Esophagus muscularis mucosa (tissue), 4 donors: ENCODE measurements at regions of chr6 and their contacts with region 1.

Region 1: DNA sequence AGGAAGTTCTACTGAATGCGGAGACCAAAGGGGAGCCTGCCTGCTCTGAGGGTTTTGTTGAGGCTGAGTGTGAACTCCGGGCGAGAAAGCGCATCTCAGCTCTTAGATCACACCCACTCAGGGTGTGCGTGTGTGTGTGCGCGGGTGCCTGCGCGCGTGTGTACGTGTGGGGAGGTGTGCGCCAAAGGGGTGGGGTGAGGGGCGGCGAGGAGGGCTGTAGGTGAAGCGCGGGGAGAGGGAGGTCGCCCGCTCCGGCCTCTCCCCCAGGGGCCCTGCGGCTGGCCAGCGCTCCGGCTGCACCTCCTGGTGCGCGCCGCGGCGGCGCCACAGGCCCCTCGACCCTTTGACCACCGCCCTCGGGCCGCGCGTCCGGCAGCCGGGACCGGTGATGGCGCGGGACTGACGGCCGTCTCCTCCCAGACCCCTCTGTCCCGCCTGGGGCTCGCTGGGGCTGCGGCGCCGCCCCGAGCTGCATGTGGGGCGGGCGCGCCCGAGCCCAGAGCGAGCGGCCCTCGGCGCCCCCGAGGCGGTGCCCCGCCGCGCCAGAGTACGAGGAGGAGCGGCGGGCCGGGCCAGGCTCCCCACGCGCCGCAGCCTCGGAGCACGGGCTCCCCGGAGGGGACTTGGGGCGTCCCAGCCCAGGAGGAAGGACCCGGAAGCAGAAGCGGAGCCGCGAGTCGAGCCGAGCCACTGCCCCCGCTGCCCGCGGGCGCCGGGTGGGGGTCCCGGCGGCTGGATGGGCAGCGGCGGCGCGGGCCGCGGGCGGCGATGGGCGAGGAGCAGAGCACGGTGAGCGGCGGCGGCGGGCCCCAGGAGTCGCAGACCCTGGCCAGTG is at the start of gene RNF217:
- DNase-seq: no peak
- H3K4me3 ChIP-seq: peak within 1 kb of the TSS; percentile 79 to 91 (median 86)
- H3K27ac ChIP-seq: peak within 1 kb of the TSS; percentile 93 to 98 (median 96)
- H3K4me1 ChIP-seq: peaks cover 0 to 45% (median 39%) of the 10 kb centered on the region in 4 donors
- H3K27me3 ChIP-seq: no peaks in the 10 kb centered on the region
- CTCF ChIP-seq: peak in 1 of 3 experiments; percentile 26
- EP300 ChIP-seq: no peak
- POLR2A ChIP-seq: no peak
- total RNA-seq, gene RNF217: 20.0 to 34.9 (median 23.2) TPM

Region 2: DNA sequence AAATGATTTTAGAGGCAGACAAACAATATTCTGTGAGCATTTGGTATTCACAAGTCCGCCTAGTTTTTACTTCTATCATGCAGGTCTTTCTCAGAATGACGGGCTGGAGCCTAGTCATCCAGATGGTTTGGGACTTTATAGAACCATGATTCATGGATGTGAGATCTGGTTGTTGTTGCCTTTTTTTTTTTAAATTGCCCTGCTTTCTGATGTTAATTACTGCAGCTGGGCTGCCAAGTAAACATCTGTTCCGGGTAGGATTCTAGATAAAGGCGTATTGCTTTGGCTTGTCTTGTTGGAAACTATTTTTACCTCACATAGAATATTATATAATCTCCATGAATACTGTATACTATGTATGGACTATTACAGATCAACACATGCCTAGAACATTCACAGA is 58.4 kb after region 1 on chr6:
- intact Hi-C with region 1: no loop called
- DNase-seq: no peak
- H3K4me3 ChIP-seq: no peak overlapping the region
- H3K27ac ChIP-seq: no peak overlapping the region
- H3K4me1 ChIP-seq: peaks cover 10 to 19% (median 15%) of the 10 kb centered on the region in 4 donors
- H3K27me3 ChIP-seq: no peaks in the 10 kb centered on the region
- CTCF ChIP-seq: no peak
- EP300 ChIP-seq: no peak
- POLR2A ChIP-seq: no peak

Region 3: DNA sequence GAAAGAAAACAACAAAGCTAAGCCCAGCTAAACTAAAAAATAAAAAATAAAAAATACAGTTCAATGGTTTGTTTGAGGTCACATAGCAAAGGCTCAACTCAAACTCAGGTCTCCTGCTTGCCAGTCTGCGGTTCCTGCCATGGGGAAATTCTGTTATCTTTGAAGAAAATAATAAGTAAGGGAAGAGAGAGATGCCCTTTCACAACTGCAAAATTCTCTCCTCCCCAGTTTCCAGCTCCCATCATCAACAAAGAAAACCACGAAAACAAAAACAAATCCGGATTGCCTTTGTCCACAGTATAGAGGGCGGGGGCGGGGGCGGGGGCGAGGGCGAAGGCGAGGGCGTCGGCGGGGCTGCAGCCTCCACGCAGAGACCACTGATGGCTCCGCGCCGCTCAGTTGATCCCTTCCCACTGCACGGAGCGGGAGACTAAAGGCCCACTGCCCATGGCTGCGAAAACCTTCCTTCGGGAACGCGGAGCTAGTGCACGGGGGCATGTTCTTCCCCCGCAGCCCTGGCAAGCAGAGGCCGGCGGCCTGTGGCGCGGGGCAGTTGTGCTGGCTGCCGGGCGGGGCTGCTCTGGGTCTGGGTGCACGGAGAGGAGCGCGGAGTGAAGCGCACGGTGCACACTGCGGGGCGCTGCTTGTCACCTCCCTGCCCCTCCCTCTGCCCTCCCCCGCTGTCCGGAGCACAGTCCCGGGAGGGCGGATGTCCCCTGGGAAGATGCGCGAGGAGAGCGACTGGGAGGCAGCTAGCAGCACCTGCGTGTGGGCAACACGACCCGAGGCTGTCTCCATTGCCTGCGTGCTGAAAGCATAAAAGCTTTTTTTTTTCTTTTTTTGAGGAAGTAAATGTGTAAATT is 137.4 kb after region 1 on chr6:
- intact Hi-C with region 1: loop called (anchors 5 kb)
- DNase-seq: no peak
- H3K4me3 ChIP-seq: peak overlapping the region; percentile 55 to 62 (median 61)
- H3K27ac ChIP-seq: peak overlapping the region; percentile 31 to 47 (median 36)
- H3K4me1 ChIP-seq: peaks cover 11 to 73% (median 56%) of the 10 kb centered on the region in 4 donors
- H3K27me3 ChIP-seq: no peaks in the 10 kb centered on the region
- CTCF ChIP-seq: no peak
- EP300 ChIP-seq: no peak
- POLR2A ChIP-seq: no peak